ENCODE measurements at regions of chr14 and their contacts with region 1.

Region 1: GRCh38 chr14:22549981-22550673 is 38.9 kb downstream of the DAD1 start:
- DNase-seq: peak; percentile 88
- H3K4me3 Mint-ChIP-seq: peak overlapping the region; percentile 80
- H3K27ac Mint-ChIP-seq: peak overlapping the region; percentile 99
- H3K4me1 Mint-ChIP-seq: peaks cover 94% of the 10 kb centered on the region
- H3K27me3 Mint-ChIP-seq: no peaks in the 10 kb centered on the region

Region 2: DNA sequence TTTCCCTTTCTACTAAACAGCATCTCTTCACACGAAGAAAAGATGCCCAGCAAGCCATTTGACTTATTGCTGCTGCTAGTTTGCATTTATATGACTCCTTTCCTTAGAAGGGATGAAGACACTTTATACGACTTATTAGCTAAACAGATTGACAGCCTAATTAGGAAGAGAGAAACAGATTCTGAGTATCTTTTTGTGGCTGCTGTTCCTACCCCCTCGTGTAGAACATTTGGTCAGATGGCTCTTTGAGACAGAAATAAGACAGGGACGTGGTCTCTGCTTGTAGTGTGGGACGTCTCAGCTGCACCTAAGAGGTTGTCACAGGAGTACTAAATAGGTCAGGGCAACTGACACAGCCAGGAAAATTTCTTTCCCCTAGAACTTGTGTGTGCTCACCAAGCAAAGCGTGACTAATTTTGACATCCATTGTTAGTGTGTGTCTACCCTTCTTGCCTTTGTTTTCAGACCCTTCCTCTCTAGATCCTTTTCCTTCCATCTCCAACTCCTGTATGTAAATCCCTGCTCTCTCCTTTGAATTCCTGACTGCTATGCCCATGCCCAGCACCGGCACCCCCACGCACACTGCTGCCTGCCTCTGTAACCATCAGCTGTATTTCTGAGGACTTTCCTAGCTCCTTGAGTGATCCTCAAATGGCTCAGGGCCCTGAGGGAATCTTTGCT is 44.3 kb before region 1 on chr14:
- CTCF ChIA-PET with region 1: interaction called, 19 read pairs
- POLR2A ChIA-PET with region 1: interaction called, 71 read pairs
- intact Hi-C with region 1: loop called (anchors 2 kb)
- DNase-seq: no peak
- H3K4me3 Mint-ChIP-seq: peak overlapping the region; percentile 79
- H3K27ac Mint-ChIP-seq: peak overlapping the region; percentile 98
- H3K4me1 Mint-ChIP-seq: peaks cover 35% of the 10 kb centered on the region
- H3K27me3 Mint-ChIP-seq: no peaks in the 10 kb centered on the region

Region 3: DNA sequence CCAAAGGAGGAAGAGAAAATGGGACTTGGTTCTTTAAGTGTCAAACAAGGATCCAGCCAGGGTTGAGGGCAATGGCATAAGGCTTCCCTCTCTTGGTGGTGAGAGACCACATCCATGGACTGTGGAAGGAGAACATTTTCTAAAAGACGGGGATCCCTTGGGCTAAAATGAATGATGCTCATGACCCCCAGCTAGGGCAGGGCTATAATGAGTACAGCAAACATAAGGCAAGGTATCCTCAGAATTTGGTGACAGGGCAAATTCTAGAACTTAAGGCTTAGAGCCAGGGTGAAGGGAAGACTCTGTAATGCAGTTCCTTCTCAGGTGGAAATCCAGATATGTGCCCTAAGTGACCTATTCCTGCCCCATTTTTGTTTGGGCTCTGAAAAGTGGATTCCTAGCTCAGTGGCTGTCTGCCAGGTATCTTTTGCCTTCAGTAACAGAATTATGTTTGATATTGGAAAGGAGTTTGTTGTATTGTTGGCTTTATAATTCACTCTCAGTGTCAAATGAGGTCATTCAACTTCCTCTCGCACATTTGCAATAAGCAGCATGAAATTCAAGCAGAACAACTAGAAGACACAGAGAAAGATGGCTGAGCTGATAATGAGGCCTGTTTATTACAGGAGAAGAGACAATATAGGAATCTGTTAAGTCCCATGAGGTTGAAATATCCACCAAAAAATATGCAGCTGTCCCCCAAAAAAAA is 37.9 kb before region 1 on chr14:
- CTCF ChIA-PET with region 1: interaction called, 19 read pairs
- POLR2A ChIA-PET with region 1: interaction called, 71 read pairs
- intact Hi-C with region 1: loop called (anchors 2 kb)
- DNase-seq: no peak
- H3K4me3 Mint-ChIP-seq: peak overlapping the region; percentile 79
- H3K27ac Mint-ChIP-seq: peak overlapping the region; percentile 98
- H3K4me1 Mint-ChIP-seq: peaks cover 57% of the 10 kb centered on the region
- H3K27me3 Mint-ChIP-seq: no peaks in the 10 kb centered on the region

Region 4: DNA sequence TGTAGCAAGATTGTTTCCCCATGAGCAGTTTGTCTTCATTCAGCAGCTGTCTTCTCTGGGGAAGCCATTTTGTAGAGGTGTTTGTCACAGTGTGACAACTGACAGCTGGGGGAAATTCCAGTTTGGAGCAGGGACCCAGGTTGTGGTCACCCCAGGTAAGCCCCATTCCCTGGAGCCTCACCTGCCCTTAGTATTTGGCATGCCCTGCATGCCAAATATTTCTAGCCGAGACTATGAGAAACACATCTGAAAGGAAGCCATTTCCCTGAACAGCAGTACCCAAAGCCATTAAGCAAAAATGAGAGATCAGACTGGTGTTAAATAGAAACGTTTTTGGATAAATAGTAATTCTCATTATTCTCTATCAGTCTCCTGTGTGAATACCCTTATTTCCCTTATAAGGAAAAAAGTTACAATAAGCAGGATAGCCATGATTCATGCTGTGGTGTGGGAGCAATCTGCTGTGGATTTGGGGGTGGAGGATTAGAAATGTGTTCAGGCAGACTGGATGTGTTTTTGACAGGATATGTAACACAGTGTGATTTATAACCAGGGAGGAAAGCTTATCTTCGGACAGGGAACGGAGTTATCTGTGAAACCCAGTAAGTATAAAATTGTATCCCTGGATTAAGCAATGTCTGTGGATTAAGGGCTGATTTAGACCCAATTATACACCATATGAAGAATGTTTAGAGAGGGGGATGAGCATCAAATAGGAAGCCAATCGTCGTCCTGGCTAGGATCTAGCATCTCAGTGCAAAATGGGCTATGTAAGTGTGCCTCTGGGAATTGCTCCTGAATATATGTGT is 30.0 kb before region 1 on chr14:
- CTCF ChIA-PET with region 1: interaction called, 4 read pairs
- POLR2A ChIA-PET with region 1: interaction called, 102 read pairs
- intact Hi-C with region 1: no loop called
- DNase-seq: no peak
- H3K4me3 Mint-ChIP-seq: peak overlapping the region; percentile 83
- H3K27ac Mint-ChIP-seq: peak overlapping the region; percentile 99
- H3K4me1 Mint-ChIP-seq: peaks cover 88% of the 10 kb centered on the region
- H3K27me3 Mint-ChIP-seq: no peaks in the 10 kb centered on the region

Region 5: DNA sequence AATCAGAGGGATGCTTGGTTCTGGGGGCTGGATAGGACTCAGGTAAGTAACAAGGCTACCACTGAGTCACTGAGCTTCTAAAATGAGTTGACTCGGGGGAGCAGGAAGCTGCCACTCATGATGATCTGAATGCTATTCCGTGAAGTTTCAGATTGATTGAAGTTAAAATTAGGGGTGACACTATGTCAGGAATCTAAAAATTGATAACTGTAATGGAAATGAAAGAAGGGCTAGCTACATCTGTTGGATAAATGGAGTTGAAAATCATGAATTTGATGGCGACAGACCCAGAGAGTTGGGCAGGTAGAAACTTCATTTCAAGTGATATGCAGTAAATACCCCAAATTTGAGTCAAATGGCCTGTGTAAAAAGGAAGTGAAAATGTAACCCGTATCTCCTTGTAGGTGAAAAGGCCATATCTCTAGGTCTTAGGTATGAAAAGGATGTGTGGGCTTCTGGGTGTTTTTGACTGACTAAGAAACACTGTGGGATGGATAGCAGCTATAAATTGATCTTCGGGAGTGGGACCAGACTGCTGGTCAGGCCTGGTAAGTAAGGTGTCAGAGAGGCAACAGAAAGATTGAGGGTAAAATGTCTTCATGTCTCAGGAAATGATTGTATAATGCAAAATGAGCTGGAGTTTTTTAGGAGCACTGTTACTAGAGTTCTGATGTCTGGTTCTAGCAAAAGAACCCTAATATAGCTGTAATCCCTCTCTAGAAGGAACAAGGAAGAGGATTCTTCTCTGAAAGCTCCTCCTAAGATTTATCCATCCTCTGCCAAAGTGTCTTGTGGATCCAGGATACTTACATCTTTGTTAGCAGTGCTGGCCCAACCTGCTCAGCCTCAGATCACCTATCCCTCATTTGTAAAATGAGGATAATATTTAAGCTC is 18.4 kb before region 1 on chr14:
- CTCF ChIA-PET with region 1: interaction called, 28 read pairs
- POLR2A ChIA-PET with region 1: interaction called, 268 read pairs
- intact Hi-C with region 1: no loop called
- DNase-seq: peak; percentile 66
- H3K4me3 Mint-ChIP-seq: peak overlapping the region; percentile 74
- H3K27ac Mint-ChIP-seq: peak overlapping the region; percentile 99
- H3K4me1 Mint-ChIP-seq: peaks cover 88% of the 10 kb centered on the region
- H3K27me3 Mint-ChIP-seq: no peaks in the 10 kb centered on the region

Region 6: DNA sequence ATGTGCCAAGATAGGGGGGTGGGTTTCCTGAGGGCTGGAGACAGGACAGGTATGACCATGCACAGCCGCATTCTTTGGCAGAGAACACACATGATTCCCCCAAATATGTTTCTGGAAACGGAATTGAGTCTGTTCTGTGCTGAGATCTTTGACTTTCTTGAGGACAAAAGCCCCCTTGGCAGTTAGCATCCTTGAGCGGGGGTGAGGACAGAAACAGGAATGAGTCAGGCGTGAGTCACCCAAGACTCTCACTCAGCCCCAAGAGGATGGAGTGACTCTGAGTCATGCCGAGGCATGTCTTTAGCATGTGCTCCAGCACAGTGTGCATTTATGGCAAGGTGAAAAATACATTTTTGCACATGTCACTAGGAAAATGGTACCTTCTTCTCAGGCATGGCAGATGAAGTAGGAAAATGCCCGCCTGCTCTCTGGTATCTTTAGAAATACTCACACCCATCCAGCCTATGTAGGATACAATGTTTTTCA is 13.2 kb before region 1 on chr14:
- CTCF ChIA-PET with region 1: interaction called, 28 read pairs
- POLR2A ChIA-PET with region 1: interaction called, 268 read pairs
- intact Hi-C with region 1: loop called (anchors 1 kb)
- DNase-seq: peak; percentile 92
- H3K4me3 Mint-ChIP-seq: peak overlapping the region; percentile 81
- H3K27ac Mint-ChIP-seq: peak overlapping the region; percentile 99
- H3K4me1 Mint-ChIP-seq: peaks cover 95% of the 10 kb centered on the region
- H3K27me3 Mint-ChIP-seq: no peaks in the 10 kb centered on the region

Region 7: DNA sequence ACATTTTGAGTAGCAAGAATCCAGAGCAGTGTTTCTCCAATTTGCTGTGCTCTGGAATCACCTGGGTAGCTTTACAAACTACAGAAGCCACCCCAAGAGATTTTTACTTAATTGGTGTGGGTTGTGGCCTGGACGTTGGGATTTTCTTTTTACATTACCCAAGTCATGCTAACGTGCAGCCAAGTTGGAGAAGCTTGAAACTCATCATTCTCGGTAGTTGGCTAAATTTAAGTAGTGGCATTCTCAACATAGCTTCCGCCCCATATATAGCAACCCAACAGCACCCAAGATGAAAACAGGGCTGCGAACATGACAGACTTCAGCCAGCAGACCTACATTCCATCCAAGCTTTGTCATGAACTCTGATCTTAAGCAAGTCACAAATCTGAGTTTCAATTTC is 13.9 kb after region 1 on chr14:
- CTCF ChIA-PET with region 1: interaction called, 273 read pairs
- POLR2A ChIA-PET with region 1: interaction called, 77 read pairs
- intact Hi-C with region 1: no loop called
- DNase-seq: peak; percentile 46
- H3K4me3 Mint-ChIP-seq: peak overlapping the region; percentile 68
- H3K27ac Mint-ChIP-seq: peak overlapping the region; percentile 99
- H3K4me1 Mint-ChIP-seq: peaks cover 95% of the 10 kb centered on the region
- H3K27me3 Mint-ChIP-seq: no peaks in the 10 kb centered on the region

Region 8: DNA sequence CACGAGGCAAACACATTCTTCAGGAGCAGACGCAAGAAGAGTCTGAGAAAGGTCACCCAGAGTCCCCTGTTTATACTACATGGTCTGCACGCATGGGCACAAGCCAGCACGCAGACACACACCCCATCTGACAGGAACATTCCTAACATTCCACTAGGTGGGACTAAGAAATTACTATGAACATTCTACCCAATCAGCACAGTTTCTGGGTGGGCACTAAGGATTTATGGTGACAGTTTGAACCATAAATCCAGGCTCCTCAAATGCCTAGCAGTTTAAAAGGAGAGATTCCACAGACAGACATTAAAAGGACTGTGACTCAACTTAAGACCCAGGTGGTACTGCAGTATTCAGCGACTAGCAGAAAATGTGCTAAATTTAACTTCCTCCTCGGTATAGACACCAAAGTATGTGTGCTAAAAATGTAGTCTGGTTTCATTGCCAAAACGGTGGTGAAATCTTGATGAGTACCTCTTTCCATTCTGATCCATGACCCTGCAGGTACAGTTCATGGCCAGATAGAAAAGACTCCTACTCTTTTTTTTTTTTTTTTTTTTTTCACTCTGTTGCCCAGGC is 64.2 kb after region 1 on chr14:
- CTCF ChIA-PET with region 1: no interaction called
- POLR2A ChIA-PET with region 1: no interaction called
- intact Hi-C with region 1: no loop called
- DNase-seq: no peak
- H3K4me3 Mint-ChIP-seq: no peak overlapping the region
- H3K27ac Mint-ChIP-seq: no peak overlapping the region
- H3K4me1 Mint-ChIP-seq: no peaks in the 10 kb centered on the region
- H3K27me3 Mint-ChIP-seq: no peaks in the 10 kb centered on the region

Region 9: DNA sequence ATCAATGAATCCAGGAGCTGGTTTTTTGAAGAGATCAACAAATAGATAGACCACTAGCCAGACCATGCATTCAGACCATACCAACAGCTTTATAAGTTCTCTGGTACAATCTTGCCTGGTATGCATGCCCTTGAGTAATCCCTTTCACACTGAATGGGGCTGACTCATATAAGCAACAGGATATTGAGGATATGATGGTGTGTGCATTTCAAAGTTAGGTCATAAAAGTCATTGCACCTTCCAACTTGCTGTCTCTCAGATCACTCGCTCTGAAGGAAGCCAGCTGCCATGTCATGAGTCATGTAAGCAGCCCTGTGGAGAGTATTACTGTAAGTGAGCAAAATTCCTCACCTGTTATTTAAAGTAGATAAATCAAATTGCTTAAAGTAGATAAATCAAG is 139.1 kb after region 1 on chr14:
- CTCF ChIA-PET with region 1: no interaction called
- POLR2A ChIA-PET with region 1: no interaction called
- intact Hi-C with region 1: no loop called
- DNase-seq: peak; percentile 48
- H3K4me3 Mint-ChIP-seq: no peak overlapping the region
- H3K27ac Mint-ChIP-seq: no peak overlapping the region
- H3K4me1 Mint-ChIP-seq: peaks cover 8% of the 10 kb centered on the region
- H3K27me3 Mint-ChIP-seq: peaks cover 41% of the 10 kb centered on the region

Region 10: GRCh38 chr14:22748631-22749068 is 198.5 kb after region 1 on chr14:
- CTCF ChIA-PET with region 1: no interaction called
- POLR2A ChIA-PET with region 1: no interaction called
- intact Hi-C with region 1: no loop called
- DNase-seq: no peak
- H3K4me3 Mint-ChIP-seq: no peak overlapping the region
- H3K27ac Mint-ChIP-seq: no peak overlapping the region
- H3K4me1 Mint-ChIP-seq: peaks cover 6% of the 10 kb centered on the region
- H3K27me3 Mint-ChIP-seq: peaks cover 23% of the 10 kb centered on the region